AG04449 (cell line): ENCODE measurements at regions of chr1 and their contacts with region 1.

Region 1: GRCh38 chr1:58652651-58653184 is 47.1 kb downstream of the MYSM1 start:
- DNase-seq: peak; percentile 33
- H3K4me3 ChIP-seq: no peak overlapping the region
- CTCF ChIP-seq: peak; percentile 74

Region 2: GRCh38 chr1:58380345-58380744 is 272.4 kb before region 1 on chr1:
- CTCF ChIA-PET with region 1: no interaction called
- POLR2A ChIA-PET with region 1: no interaction called
- DNase-seq: no peak
- H3K4me3 ChIP-seq: no peak overlapping the region
- CTCF ChIP-seq: no peak

Region 3: GRCh38 chr1:58432851-58433668 is 219.7 kb before region 1 on chr1:
- CTCF ChIA-PET with region 1: no interaction called
- POLR2A ChIA-PET with region 1: no interaction called
- DNase-seq: peak; percentile 68
- H3K4me3 ChIP-seq: no peak overlapping the region
- CTCF ChIP-seq: peak; percentile 33

Region 4: GRCh38 chr1:58546520-58547308 is 106.0 kb before region 1 on chr1 and contains the start of gene OMA1:
- CTCF ChIA-PET with region 1: interaction called, 65 read pairs
- POLR2A ChIA-PET with region 1: interaction called, 3 read pairs
- DNase-seq: peak; percentile 86
- H3K4me3 ChIP-seq: peak within 1 kb of the TSS; percentile 77
- CTCF ChIP-seq: peak; percentile 96

Region 5: GRCh38 chr1:58633121-58633520 is 19.6 kb before region 1 on chr1:
- CTCF ChIA-PET with region 1: interaction called, 10 read pairs
- POLR2A ChIA-PET with region 1: no interaction called
- DNase-seq: no peak
- H3K4me3 ChIP-seq: no peak overlapping the region
- CTCF ChIP-seq: no peak

Region 6: GRCh38 chr1:58670181-58670580 is 17.5 kb after region 1 on chr1:
- CTCF ChIA-PET with region 1: interaction called, 11 read pairs
- POLR2A ChIA-PET with region 1: no interaction called
- DNase-seq: no peak
- H3K4me3 ChIP-seq: no peak overlapping the region
- CTCF ChIP-seq: no peak